Psoas muscle (tissue), 8 donors: ENCODE measurements at regions of chr1 and their contacts with region 1.

Region 1: DNA sequence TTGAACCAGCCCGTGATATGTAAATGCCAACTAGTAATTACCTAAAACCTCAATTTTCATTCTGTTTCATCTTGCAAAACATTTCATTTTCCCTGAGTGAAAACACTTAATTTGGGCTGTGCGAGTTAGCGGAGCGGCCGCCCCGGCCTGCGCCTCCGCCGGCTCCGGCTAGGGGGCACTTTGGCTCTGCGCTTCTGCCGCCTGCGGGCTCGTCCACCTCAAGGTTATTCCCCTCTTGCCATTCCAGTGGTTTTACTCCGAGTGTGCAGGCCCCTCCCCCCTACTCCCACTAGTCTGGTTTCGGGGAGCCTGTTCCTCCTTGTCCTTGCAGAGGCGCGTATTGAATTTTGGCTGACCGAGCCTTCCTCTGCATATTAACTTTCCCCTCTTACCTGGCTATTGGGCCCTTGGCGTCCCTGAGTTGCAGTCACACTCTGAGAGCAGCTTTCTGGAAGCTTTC is 55.6 kb downstream of the PEX14 start:
- DNase-seq: no peak
- ATAC-seq: no peak
- H3K4me3 ChIP-seq: no peak overlapping the region
- H3K27ac ChIP-seq: no peak overlapping the region
- H3K4me1 ChIP-seq: peaks cover 27% of the 10 kb centered on the region
- H3K27me3 ChIP-seq: no peaks in the 10 kb centered on the region
- CTCF ChIP-seq: peak; percentile 43

Region 2: GRCh38 chr1:10651389-10651766 is 121.1 kb after region 1 on chr1:
- intact Hi-C with region 1: no loop called
- DNase-seq: no peak
- ATAC-seq: no peak
- H3K4me3 ChIP-seq: no peak overlapping the region
- H3K27ac ChIP-seq: no peak overlapping the region
- H3K4me1 ChIP-seq: no peaks in the 10 kb centered on the region
- H3K27me3 ChIP-seq: no peaks in the 10 kb centered on the region
- CTCF ChIP-seq: no peak

Region 3: GRCh38 chr1:10663678-10664035 is 133.3 kb after region 1 on chr1:
- intact Hi-C with region 1: loop called in 1 of 2 experiments (anchors 10 kb)
- DNase-seq: peak; percentile 51 to 75
- ATAC-seq: peak; percentile 23 to 49 (median 36)
- H3K4me3 ChIP-seq: peak overlapping the region; percentile 42
- H3K27ac ChIP-seq: peak overlapping the region; percentile 92
- H3K4me1 ChIP-seq: peaks cover 57% of the 10 kb centered on the region
- H3K27me3 ChIP-seq: no peaks in the 10 kb centered on the region
- CTCF ChIP-seq: no peak

Region 4: DNA sequence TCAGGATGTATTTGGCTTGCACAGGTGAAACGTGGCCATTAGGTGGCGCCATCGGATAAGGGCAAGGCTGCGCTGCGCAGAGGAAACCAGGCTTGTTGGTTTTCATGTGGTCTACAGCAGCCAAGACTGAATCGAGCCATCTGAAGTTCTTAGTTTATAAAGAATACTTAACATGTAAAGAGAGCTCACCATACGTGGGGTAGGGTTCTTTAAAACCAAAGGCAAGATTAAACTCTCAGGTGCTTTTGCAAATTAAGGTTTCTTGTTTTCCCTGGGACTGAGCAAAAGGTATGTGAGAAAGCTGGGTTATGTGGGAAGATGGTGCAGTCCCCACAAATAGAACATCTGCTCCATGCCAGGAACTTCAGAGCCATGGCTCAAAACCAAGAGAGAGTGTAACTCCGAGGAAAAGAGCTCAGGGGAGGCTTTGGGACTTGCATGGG is 507.4 kb after region 1 on chr1:
- intact Hi-C with region 1: no loop called
- DNase-seq: peak; percentile 86 to 93
- ATAC-seq: peak; percentile 93 to 97 (median 95)
- H3K4me3 ChIP-seq: peak overlapping the region; percentile 40
- H3K27ac ChIP-seq: peak overlapping the region; percentile 61
- H3K4me1 ChIP-seq: peaks cover 8% of the 10 kb centered on the region
- H3K27me3 ChIP-seq: peaks cover 0 to 2% (median 0%) of the 10 kb centered on the region in 3 donors
- CTCF ChIP-seq: peak; percentile 98